Posterior vena cava (tissue), 2 donors: ENCODE measurements at regions of chr3 and their contacts with region 1.

Region 1: DNA sequence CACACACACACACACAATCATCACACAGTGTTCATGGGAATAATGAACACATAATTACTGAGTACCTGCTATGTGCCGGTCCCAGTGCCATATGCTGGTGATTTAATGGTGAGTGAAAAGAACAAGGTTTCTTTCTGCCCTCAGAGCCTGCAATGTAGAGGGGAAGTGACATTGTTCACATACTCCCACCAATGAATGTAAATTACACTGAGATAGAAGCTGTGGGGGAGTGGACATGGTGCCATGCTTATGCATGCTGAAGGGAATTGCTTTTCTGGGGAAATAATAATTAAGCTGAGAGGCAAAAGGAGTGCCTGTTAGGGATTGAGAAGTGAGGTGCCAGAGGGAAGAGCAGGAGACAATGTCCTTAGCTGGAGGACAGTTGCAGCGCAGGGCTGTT is 175.1 kb downstream of the MFSD1 start:
- DNase-seq: no peak

Region 2: GRCh38 chr3:159210336-159210735 is 233.4 kb after region 1 on chr3:
- intact Hi-C with region 1: loop called in 1 of 2 experiments (anchors 10 kb)
- DNase-seq: no peak